Transverse colon (tissue), 4 donors: ENCODE measurements at regions of chr2 and their contacts with region 1.

Region 1: DNA sequence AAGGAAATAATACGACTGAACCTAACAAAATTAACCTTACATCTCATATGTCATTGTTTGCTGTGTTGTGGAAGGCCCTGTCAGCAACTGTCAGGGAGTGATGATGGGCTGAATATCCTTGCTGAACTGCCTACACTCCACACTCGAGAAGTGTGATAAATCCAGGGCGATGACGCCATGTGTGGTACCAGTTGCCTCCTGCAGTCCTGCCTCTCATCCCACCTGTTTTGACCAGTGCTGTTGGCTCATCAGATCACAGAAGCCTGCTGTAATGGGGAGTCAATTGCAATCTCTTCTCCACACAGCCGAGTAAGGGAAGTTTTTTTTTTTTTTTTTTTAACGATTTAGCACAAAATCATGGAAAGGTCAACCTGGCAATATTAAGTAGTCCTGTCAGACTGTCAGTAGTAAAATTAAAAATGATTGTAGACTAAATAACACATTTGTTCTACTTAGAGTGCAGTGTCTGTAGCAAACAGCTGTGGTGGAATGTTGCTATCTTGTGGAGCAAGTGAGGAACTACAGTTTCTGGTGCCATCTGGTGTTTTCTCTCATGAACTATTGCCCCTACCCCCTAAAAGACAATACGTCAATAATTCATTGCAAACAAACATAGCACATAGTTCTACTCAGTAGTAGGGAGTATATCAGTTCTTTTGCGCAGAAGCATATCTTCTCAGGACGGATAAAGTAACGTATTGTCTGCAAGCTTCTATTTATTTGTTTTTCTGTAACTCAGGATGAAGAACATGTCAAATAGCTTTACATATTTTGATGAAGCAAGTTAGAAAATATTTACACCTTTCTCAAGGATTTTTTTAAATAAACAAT is 347.6 kb downstream of the CTNNA2 start:
- DNase-seq: no peak
- H3K4me3 ChIP-seq: no peak overlapping the region
- H3K27ac ChIP-seq: no peak overlapping the region
- H3K4me1 ChIP-seq: no peaks in the 10 kb centered on the region
- H3K27me3 ChIP-seq: no peaks in the 10 kb centered on the region
- CTCF ChIP-seq: peak; percentile 15 to 50 (median 35)
- EP300 ChIP-seq: no peak
- POLR2A ChIP-seq: no peak

Region 2: GRCh38 chr2:79235135-79235534 is 625.3 kb before region 1 on chr2:
- in situ Hi-C with region 1: loop called in 1 of 4 experiments (anchors 25 kb)
- intact Hi-C with region 1: no loop called
- DNase-seq: no peak
- H3K4me3 ChIP-seq: no peak overlapping the region
- H3K27ac ChIP-seq: no peak overlapping the region
- H3K4me1 ChIP-seq: no peaks in the 10 kb centered on the region
- H3K27me3 ChIP-seq: no peaks in the 10 kb centered on the region
- CTCF ChIP-seq: no peak
- EP300 ChIP-seq: no peak
- POLR2A ChIP-seq: no peak

Region 3: DNA sequence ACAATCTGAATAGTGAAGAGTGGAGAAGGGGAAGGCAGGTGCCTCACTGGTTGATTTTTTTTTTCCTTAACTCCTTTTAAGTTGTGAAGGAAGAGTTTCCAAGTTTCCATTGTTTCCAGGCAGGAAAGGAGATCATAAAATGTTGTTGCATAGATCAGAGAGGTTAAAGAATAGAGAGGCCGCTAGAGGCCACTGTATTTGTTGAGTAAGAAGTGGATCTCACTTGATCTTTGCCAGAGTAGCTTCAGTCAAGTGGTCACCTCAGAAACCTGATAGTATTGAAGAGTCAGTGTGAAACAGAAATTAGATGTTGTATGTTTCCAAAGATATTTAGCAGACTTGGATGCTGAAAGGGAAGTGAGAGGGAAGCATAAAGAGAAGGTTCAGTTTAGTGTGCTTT is 330.0 kb before region 1 on chr2:
- in situ Hi-C with region 1: loop called in 1 of 4 experiments (anchors 25 kb)
- intact Hi-C with region 1: no loop called
- DNase-seq: no peak
- H3K4me3 ChIP-seq: no peak overlapping the region
- H3K27ac ChIP-seq: no peak overlapping the region
- H3K4me1 ChIP-seq: no peaks in the 10 kb centered on the region
- H3K27me3 ChIP-seq: no peaks in the 10 kb centered on the region
- CTCF ChIP-seq: peak in 1 of 5 experiments; percentile 5
- EP300 ChIP-seq: no peak
- POLR2A ChIP-seq: no peak

Region 4: DNA sequence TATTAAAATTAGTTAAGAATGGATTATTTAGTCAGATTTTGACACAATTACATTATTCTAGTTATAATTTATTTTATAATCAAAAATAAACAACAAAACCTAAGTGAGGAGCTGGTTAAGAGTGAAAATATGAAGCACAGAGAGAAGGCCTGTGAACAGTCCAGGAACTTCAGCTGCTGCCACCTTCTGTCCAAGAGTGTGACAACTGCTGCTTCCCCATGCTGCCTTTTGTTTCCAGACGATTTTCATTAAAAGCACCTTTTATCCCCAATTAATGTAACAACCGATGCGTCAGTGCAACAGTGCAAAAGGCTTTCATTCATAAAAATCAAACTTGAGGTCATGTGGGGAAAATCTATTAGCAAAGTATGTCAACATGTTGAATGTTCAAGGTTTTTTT is 16.0 kb after region 1 on chr2:
- in situ Hi-C with region 1: no loop called
- intact Hi-C with region 1: no loop called
- DNase-seq: no peak
- H3K4me3 ChIP-seq: no peak overlapping the region
- H3K27ac ChIP-seq: no peak overlapping the region
- H3K4me1 ChIP-seq: no peaks in the 10 kb centered on the region
- H3K27me3 ChIP-seq: no peaks in the 10 kb centered on the region
- CTCF ChIP-seq: no peak
- EP300 ChIP-seq: no peak
- POLR2A ChIP-seq: no peak

Region 5: DNA sequence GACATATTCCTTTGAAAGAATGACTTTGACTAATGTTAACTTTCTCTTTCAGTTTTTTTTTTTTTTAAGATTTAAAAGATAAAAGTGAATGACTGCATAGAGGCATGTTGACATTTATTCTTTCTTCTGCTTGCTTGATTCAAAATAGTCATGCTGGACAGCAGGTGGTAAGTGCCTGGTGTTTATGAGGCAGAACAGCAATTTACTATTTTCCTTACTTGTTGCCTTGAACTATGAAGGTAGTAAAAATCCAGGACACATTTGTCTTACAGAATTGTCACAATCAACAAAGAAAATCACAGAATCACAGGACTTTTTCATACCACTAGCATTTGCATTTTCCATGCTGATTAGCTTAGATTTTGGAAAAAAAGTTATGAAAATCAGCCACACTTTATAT is 40.7 kb after region 1 on chr2:
- in situ Hi-C with region 1: no loop called
- intact Hi-C with region 1: no loop called
- DNase-seq: no peak
- H3K4me3 ChIP-seq: no peak overlapping the region
- H3K27ac ChIP-seq: no peak overlapping the region
- H3K4me1 ChIP-seq: no peaks in the 10 kb centered on the region
- H3K27me3 ChIP-seq: no peaks in the 10 kb centered on the region
- CTCF ChIP-seq: no peak
- EP300 ChIP-seq: no peak
- POLR2A ChIP-seq: no peak

Region 6: GRCh38 chr2:79964966-79965365 is 104.5 kb after region 1 on chr2:
- in situ Hi-C with region 1: no loop called
- intact Hi-C with region 1: no loop called
- DNase-seq: no peak
- H3K4me3 ChIP-seq: no peak overlapping the region
- H3K27ac ChIP-seq: no peak overlapping the region
- H3K4me1 ChIP-seq: peaks cover 0 to 27% (median 10%) of the 10 kb centered on the region in 4 donors
- H3K27me3 ChIP-seq: no peaks in the 10 kb centered on the region
- CTCF ChIP-seq: no peak
- EP300 ChIP-seq: no peak
- POLR2A ChIP-seq: no peak